ENCODE measurements at regions of chr19 and their contacts with region 1.

Region 1: DNA sequence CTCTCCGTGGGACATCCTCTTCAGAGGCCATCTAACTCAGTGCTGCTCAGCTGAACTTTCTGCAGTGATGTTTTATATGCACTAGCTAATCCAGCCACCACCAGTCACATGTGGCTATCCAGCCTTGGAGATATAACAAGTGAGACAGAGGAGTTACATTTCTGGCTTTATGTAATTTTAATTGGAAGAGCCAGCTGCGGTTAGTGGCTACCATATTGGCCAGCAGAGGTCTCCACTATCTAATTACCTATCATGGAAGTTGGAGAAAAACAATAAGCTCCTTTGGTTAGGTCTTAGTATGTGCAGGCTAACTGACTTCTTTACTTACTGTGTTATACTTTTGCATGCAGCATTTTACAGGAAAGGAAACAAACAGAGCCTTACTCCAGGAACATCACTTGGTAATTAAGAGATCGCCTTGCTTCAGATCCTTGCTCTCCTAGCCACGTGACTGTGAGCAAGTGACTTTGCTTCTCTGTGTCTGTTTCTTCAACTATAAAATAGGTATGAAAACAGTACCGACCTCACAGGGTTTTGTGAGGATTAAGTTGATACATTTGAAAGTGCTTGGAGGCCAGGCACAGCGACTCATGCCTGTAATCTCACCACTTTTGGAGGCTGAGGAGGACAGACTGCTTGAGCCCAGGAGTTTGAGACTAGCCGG is 1.6 kb upstream of the KLK10 start:
- DNase-seq: no peak
- ATAC-seq: peak; percentile 2 to 27

Region 2: DNA sequence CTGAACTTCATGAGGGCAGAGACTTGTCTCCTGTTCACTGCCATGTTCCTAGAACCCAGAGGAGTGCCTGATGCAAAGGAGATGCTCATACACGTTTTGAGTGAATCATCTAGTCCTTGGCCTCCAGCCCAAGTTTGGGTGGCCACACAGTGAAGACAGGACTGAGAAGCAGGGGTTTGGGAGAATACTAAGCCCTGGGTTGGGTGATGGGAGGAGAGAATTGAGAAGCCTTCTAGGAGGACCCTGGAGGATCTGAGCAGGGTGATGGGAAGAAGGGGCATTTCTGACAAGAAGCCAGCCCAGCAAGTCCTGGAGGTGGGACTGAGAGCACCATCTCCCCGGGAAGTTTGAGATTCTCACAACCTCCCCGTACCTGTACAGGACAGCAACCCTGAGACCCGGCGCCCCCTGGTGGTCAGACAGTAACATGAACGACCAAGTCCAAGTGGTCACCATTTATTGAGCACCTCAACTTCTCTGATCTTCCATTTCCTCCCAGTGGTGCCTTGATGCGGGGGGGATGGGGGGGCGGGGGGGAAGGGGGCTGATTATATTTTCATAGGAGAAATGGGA is 76.1 kb after region 1 on chr19:
- intact Hi-C with region 1: loop called (anchors 1 to 5 kb)
- DNase-seq: peak; percentile 72
- ATAC-seq: peak; percentile 39 to 66

Region 3: GRCh38 chr19:51166846-51167490 is 145.8 kb after region 1 on chr19:
- intact Hi-C with region 1: loop called (anchors 5 kb)
- DNase-seq: no peak
- ATAC-seq: peak; percentile 68 to 72

Region 4: GRCh38 chr19:51172223-51172622 is 151.1 kb after region 1 on chr19:
- intact Hi-C with region 1: loop called (anchors 5 kb)
- DNase-seq: no peak
- ATAC-seq: no peak